ENCODE measurements at regions of chr12 and their contacts with region 1.

Region 1: DNA sequence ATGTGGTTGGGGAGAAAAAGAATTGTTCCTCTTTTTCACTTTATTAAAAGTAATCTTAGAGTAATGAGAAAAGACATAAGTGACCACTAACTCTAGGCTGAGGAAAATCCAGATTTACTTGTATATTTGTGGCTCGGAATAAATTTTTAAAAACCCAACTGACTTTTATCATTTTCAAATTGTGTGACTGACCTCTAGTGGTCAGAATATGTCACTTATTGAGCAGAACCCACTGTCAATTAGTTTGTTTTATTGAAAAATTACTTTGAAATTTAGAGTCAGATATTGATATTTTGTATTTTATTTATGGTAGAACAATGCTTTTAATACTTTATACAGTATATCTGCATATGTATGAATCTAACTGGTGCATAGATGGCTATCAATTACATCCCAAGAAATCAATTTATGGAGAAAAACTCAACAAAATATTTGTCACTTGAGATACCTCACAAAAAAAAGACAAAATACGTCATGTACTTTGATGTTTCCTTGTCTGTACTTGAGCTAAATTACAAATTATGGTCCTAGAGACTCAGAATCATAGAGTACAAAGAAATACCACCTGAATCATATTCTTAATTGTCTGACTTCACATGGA is 229.4 kb downstream of the CNTN1 start:
- DNase-seq: no peak
- H3K4me3 ChIP-seq: no peak overlapping the region
- H3K27ac ChIP-seq: no peak overlapping the region
- H3K4me1 ChIP-seq: no peaks in the 10 kb centered on the region
- H3K27me3 ChIP-seq: no peaks in the 10 kb centered on the region
- CTCF ChIP-seq: peak; percentile 80

Region 2: DNA sequence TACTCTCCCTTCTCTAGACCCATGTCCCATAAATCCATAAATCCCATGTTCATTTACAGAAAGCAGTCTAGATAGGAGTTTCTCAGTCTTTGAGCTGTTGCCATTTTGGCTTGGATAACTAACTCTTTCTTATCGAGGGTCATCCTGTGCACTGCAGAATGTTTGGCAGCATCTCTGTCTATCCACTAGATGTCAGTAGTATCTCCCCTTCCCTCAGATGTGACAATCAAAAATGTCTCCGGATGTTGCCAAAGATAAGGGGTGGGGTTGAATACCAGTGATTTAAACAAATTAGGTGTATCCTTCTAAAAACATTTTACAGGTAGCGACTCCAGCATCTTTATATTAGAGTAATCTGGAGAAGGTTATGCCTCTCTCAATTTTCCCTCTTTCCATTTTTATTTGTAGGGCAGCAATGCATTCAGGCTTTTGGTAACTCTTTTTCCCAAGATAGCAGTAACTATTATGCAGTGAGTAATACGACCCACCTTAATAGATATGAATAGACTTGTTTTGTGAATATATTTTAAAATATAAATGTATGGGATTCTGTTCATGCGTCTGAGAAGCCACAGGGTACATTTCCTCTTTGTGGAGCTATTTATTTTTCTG is 596.2 kb before region 1 on chr12:
- CTCF ChIA-PET with region 1: no interaction called
- POLR2A ChIA-PET with region 1: no interaction called
- intact Hi-C with region 1: loop called (anchors 5 kb)
- DNase-seq: peak; percentile 4 to 68
- H3K4me3 ChIP-seq: peak overlapping the region; percentile 57; the same call in 1 of the 2 replicates
- H3K27ac ChIP-seq: peak overlapping the region; percentile 33
- H3K4me1 ChIP-seq: peaks cover 5% of the 10 kb centered on the region; the same call in 1 of the 2 replicates
- H3K27me3 ChIP-seq: no peaks in the 10 kb centered on the region
- CTCF ChIP-seq: peak; percentile 71

Region 3: GRCh38 chr12:40446385-40446784 is 475.3 kb before region 1 on chr12:
- CTCF ChIA-PET with region 1: no interaction called
- POLR2A ChIA-PET with region 1: no interaction called
- intact Hi-C with region 1: loop called (anchors 5 kb)
- DNase-seq: no peak
- H3K4me3 ChIP-seq: no peak overlapping the region
- H3K27ac ChIP-seq: no peak overlapping the region
- H3K4me1 ChIP-seq: no peaks in the 10 kb centered on the region
- H3K27me3 ChIP-seq: no peaks in the 10 kb centered on the region
- CTCF ChIP-seq: peak; percentile 62

Region 4: GRCh38 chr12:40622246-40622838 is 299.3 kb before region 1 on chr12:
- CTCF ChIA-PET with region 1: no interaction called
- POLR2A ChIA-PET with region 1: no interaction called
- intact Hi-C with region 1: loop called (anchors 1 kb)
- DNase-seq: peak in 1 of 2 experiments; percentile 30
- H3K4me3 ChIP-seq: no peak overlapping the region
- H3K27ac ChIP-seq: no peak overlapping the region
- H3K4me1 ChIP-seq: no peaks in the 10 kb centered on the region
- H3K27me3 ChIP-seq: no peaks in the 10 kb centered on the region
- CTCF ChIP-seq: peak; percentile 86

Region 5: DNA sequence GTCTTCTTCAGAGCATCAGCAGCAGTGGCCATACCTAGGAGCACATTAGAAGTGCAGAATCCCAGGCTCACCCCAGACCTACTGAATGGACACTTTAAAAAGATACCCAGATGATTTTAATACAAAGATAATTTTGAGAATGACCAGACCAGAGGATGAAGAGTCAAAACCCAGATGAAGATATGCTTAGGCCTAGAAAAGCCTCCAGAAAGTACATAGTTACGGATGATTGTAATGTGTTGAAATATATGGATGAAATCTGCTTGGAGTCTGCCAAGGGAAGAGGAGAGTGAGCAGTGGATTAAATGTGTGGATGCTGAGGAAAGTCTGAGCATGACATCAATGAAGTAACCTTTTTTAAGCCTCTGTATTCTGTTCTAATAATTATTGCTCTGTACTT is 16.2 kb after region 1 on chr12:
- CTCF ChIA-PET with region 1: no interaction called
- POLR2A ChIA-PET with region 1: no interaction called
- intact Hi-C with region 1: no loop called
- DNase-seq: no peak
- H3K4me3 ChIP-seq: no peak overlapping the region
- H3K27ac ChIP-seq: no peak overlapping the region
- H3K4me1 ChIP-seq: no peaks in the 10 kb centered on the region
- H3K27me3 ChIP-seq: no peaks in the 10 kb centered on the region
- CTCF ChIP-seq: no peak